ENCODE measurements at regions of chr15 and their contacts with region 1.

Region 1: DNA sequence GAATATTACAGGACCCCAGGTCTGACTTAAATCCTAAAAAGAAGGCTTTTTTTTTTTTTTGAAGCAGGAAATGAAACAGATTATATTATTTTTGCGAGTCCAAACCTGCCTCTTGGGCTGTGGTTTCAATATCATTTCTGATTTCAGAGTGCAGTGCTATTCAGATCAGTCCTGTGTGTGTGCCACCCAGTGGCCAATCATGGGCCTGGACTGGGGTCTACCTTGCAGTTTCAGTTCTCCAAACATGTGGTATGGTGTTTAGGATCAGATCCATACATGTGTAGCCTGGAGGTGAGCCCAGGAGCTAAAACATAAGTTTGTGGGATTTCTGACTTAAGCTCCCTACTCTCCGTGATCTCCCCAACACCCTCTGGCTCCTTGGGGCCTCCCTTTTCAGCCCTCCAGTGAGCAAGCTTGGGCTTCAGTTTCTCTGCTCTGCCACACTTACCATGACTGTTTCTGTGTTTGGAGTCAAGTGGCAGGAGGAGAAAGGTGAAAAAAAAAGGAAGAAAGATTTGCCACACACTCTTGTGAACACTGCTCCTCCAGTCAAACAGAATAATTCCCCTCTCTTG is 12.1 kb upstream of the THSD4 start:
- DNase-seq: peak; percentile 68
- H3K4me3 Mint-ChIP-seq: no peak overlapping the region
- H3K27ac Mint-ChIP-seq: no peak overlapping the region
- H3K4me1 Mint-ChIP-seq: no peaks in the 10 kb centered on the region
- H3K27me3 Mint-ChIP-seq: no peaks in the 10 kb centered on the region
- CTCF ChIP-seq: peak; percentile 56

Region 2: DNA sequence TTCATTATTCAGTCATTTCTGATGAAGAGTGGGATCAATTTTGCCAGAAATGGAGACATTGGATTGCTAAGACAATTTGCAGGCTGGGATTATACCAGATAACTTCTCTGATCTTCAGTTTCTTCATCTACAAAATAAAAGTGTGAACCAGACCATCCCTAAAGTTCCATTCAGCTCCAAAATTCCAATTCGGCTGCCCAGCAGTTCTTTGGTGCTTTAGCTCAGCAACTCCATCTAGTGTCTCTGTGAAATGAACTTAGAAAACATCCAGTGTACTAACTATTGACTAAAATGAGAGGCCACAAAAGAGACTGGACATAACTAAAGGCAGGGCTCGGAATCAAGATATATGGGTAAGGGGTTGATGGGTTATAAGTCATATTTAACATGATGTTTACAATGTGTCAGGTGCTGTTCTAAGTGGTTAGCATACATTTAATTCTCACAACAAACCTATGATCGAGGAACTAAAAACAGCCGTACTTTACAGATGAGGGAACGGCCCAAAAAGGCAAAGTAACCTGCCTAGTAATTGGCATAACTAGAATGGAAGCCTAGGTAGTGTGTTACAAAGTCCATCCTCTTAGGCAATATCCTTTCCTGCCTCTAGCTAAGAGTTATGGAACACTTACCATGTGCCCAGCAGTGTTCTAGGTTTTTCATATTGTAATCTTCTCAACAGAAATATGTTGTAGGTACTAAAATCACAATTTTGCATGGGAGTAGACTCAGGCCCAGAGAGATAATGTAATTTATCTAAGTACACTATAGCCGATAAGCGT is 228.0 kb before region 1 on chr15:
- CTCF ChIA-PET with region 1: no interaction called
- intact Hi-C with region 1: no loop called
- DNase-seq: no peak
- H3K4me3 Mint-ChIP-seq: no peak overlapping the region
- H3K27ac Mint-ChIP-seq: no peak overlapping the region
- H3K4me1 Mint-ChIP-seq: peaks cover 17% of the 10 kb centered on the region
- H3K27me3 Mint-ChIP-seq: no peaks in the 10 kb centered on the region
- CTCF ChIP-seq: no peak

Region 3: GRCh38 chr15:70974004-70974832 is 129.0 kb before region 1 on chr15:
- CTCF ChIA-PET with region 1: interaction called, 3 read pairs
- intact Hi-C with region 1: loop called (anchors 2 kb)
- DNase-seq: peak; percentile 3
- H3K4me3 Mint-ChIP-seq: no peak overlapping the region
- H3K27ac Mint-ChIP-seq: no peak overlapping the region
- H3K4me1 Mint-ChIP-seq: no peaks in the 10 kb centered on the region
- H3K27me3 Mint-ChIP-seq: no peaks in the 10 kb centered on the region
- CTCF ChIP-seq: peak; percentile 55

Region 4: DNA sequence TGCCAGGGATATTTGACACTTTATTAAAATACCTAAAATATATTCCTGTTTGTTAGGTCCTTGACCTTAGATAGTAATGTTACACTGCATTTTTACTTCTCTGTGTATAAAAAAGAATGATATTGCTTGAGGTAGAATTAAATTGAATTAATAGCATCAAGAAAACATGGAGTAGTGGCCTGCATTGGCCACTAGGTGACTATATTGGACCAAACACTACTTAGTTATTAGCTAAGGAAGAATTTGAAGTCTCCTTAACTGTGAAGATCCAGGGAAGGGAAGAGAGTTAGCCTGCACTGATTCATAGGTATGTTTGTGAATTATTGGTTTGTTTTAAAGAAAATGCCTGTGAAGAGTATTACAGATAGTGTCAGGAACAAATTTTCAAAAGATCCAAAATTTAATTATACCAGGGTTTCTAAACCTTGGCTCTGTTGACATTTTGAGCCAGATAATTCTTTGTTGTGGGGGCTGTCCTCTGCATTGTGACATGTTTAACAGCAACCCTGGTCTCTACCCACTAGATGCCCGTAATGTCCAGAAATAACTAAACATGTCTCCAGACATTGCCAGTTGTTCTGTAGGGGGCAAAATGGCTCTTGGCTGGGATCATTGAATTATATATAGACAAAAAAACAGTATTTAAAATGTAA is 91.6 kb before region 1 on chr15:
- CTCF ChIA-PET with region 1: interaction called, 11 read pairs
- intact Hi-C with region 1: loop called (anchors 1 kb)
- DNase-seq: peak; percentile 28
- H3K4me3 Mint-ChIP-seq: no peak overlapping the region
- H3K27ac Mint-ChIP-seq: no peak overlapping the region
- H3K4me1 Mint-ChIP-seq: no peaks in the 10 kb centered on the region
- H3K27me3 Mint-ChIP-seq: no peaks in the 10 kb centered on the region
- CTCF ChIP-seq: peak; percentile 71

Region 5: DNA sequence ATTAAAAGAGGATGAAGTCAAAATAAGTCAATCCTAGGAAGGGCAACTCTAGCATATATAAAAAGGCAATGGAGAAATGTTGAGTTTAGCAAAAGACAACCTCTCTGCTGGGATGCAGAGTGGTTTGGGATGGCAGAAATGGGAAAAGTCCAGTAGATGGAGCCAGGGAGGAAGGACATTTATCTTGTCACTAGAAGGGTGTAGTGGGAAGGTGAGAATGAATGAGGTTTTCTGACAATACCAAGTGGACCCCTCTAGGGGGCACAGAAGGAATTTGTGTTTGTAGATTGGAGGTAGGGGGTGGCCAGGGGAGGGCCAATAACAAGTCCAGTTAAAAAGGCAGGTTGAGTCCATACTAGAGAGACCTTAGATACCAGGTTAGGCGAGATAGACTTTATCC is 92.1 kb after region 1 on chr15:
- CTCF ChIA-PET with region 1: no interaction called
- intact Hi-C with region 1: no loop called
- DNase-seq: no peak
- H3K4me3 Mint-ChIP-seq: no peak overlapping the region
- H3K27ac Mint-ChIP-seq: no peak overlapping the region
- H3K4me1 Mint-ChIP-seq: peaks cover 10% of the 10 kb centered on the region
- H3K27me3 Mint-ChIP-seq: no peaks in the 10 kb centered on the region
- CTCF ChIP-seq: no peak

Measured in Calu3 (cell line).